MCF 10A (cell line): ENCODE measurements at regions of chr2 and their contacts with region 1.

Region 1: DNA sequence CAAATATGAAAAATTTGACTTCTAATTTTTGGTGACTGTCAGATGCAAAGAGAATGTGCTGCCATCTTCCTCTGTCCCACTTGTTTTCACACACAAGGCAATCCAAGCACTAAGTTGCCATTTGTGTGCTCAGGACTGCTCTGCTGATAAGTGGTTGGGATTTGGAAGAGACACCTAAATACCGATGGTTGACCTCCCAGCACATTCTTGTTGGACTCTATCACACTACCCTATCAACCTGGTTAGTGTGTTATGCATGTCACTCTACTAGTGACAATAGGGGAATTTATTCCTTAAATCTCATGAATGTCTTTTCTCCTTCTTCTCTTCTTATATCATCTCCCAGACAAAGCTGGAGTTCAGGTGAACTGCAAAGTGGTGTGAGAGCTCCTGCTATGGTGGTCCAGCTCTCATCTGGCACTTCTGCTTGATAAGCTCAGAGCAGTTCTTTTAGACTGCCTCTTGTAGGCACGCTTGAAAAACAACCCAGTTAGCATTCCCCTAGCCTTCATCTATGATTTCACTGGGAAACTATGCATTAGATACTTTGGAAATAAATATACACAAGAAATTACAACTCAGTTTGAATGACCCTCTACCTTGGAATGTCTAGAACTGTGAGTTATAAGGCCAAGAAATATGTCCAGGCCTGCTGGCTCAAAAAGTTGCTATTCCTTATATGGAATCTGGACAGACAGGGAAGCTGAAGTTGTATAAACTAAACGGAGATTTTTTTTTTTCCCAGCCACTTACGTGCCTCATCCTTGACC is 404.8 kb downstream of the MEIS1 start:
- DNase-seq: peak; percentile 79
- H3K4me3 Mint-ChIP-seq: peak overlapping the region; percentile 17
- H3K27ac Mint-ChIP-seq: peak overlapping the region; percentile 93
- H3K4me1 Mint-ChIP-seq: peaks cover 46% of the 10 kb centered on the region
- H3K27me3 Mint-ChIP-seq: no peaks in the 10 kb centered on the region
- CTCF ChIP-seq: no peak

Region 2: DNA sequence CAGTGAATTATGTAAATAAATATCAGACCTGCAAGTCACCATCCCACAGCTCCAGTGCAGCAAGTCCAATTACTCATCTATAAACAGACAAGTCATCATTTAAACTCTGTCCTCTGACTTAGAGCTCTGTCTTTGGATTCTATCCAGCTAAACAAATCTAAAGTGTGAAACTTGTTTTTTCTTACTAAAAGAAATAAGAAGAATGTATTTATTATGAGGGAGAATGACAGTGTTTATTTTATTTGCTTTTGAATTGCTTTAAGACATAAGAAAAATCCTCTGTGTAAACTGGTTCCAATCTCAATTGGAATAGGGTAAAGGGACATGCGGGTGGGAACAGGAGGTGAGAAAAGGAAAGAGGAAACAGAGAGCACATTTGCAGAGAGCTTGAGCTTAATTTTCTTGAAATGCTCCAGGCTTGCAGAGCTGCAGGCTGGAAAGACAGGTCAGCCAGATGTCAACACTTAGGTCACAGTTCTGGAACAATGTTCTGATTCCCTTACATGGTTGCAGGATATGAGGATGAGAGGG is 49.0 kb before region 1 on chr2:
- CTCF ChIA-PET with region 1: interaction called, 3 read pairs
- POLR2A ChIA-PET with region 1: interaction called, 14 read pairs
- intact Hi-C with region 1: no loop called
- DNase-seq: peak; percentile 40
- H3K4me3 Mint-ChIP-seq: no peak overlapping the region
- H3K27ac Mint-ChIP-seq: peak overlapping the region; percentile 6
- H3K4me1 Mint-ChIP-seq: peaks cover 16% of the 10 kb centered on the region
- H3K27me3 Mint-ChIP-seq: no peaks in the 10 kb centered on the region
- CTCF ChIP-seq: no peak

Region 3: DNA sequence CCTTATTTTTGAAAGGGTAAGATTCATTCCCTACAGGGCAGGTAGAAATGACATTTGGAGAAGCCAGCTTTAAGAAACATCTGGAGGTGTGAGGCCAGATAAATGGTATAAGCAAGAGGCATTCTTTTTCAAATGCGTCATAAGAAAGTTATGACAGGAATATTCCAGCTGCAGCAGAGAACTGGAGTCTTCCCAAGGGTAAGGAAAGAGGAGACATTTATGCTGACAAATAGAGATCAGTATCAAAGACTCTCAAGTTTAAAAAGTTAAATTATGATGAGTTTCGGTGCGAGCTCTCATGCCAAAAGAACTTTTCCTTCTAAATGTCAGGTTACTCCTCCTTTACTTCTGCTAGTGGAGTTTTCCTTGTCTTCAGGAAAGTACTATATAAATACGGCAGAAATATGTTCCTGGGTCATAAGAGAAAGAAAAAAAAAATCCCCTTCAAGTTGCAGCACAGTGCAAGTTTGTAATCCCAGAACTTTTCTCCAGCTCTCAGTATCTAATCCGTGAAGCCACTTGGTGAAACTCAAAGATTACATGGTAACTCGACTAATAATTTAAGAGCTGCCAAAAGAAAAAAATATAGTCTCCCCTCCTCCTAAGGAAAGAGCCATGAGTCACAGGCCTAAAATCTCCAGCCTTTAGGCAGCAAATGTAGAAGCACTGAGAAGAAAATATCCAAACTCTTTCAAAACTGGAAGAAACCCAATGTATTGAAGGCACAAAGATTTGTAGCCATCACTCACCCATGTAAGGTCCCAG is 23.3 kb after region 1 on chr2:
- CTCF ChIA-PET with region 1: no interaction called
- POLR2A ChIA-PET with region 1: interaction called, 23 read pairs
- intact Hi-C with region 1: no loop called
- DNase-seq: peak; percentile 45
- H3K4me3 Mint-ChIP-seq: peak overlapping the region; percentile 47
- H3K27ac Mint-ChIP-seq: peak overlapping the region; percentile 91
- H3K4me1 Mint-ChIP-seq: peaks cover 13% of the 10 kb centered on the region
- H3K27me3 Mint-ChIP-seq: no peaks in the 10 kb centered on the region
- CTCF ChIP-seq: no peak

Region 4: DNA sequence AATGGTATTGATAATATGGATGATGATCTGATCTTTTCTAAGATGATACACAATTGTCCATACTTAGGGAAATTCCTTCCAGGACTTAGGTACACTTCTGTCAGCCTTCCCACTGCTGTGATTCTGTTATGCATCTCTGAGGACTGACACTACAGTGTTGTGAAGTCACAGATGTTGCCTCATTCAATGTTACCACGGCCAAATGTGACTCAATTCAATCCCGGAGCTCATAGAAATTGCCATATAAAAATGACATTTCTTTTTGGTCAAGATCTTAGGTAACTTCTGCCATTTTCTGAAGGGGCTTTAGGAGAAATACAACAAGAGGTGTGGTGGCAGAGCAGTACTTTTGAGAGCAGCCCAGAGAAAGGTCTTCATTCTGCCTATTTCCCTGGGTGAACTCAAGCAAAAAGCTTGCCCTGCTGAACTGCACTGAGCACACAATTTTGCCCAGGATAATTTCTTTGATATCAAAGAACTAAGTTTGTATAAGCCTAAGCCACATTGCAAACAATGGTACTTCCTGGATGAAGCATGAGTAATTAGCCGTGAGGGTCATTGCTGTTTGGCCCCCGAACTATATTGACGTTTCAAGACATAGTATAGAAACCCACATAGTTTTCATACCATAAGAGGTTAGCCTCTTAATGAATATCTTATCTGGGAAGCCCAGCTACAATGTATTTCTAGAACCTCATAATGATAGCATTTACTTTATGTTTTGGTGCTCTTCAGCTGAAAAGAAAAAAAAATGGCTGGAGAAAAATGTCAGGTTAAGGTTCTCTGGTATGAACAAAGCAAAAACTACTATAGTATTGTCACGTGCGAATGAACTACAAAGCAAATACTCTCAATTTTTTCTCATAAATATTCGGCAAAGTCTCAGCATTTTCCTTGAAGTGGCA is 32.6 kb after region 1 on chr2:
- CTCF ChIA-PET with region 1: no interaction called
- POLR2A ChIA-PET with region 1: interaction called, 11 read pairs
- intact Hi-C with region 1: no loop called
- DNase-seq: peak; percentile 34
- H3K4me3 Mint-ChIP-seq: no peak overlapping the region
- H3K27ac Mint-ChIP-seq: no peak overlapping the region
- H3K4me1 Mint-ChIP-seq: peaks cover 25% of the 10 kb centered on the region
- H3K27me3 Mint-ChIP-seq: no peaks in the 10 kb centered on the region
- CTCF ChIP-seq: no peak

Region 5: GRCh38 chr2:66929632-66930338 is 90.0 kb after region 1 on chr2:
- CTCF ChIA-PET with region 1: interaction called, 3 read pairs
- POLR2A ChIA-PET with region 1: interaction called, 41 read pairs
- intact Hi-C with region 1: no loop called
- DNase-seq: peak; percentile 79
- H3K4me3 Mint-ChIP-seq: peak overlapping the region; percentile 55
- H3K27ac Mint-ChIP-seq: peak overlapping the region; percentile 68
- H3K4me1 Mint-ChIP-seq: peaks cover 22% of the 10 kb centered on the region
- H3K27me3 Mint-ChIP-seq: no peaks in the 10 kb centered on the region
- CTCF ChIP-seq: no peak

Region 6: DNA sequence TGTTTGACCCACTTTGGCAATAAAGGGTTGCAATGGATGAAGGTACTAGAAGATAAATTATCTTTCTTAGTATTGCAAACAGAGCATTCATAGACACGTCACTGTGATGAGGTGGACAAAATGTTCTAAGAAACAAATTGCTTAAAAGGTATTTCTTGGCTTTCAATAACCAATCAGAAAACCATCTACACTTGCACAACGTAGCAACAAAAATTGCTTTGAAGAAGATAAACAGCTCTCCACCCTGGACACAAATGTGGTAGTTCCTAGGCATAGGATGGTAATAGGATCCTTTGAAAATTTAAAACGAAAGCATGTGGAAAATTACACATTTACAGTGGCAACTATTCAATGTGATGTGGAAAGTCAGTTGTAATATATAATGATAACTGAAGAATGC is 117.5 kb after region 1 on chr2:
- CTCF ChIA-PET with region 1: no interaction called
- POLR2A ChIA-PET with region 1: interaction called, 27 read pairs
- intact Hi-C with region 1: no loop called
- DNase-seq: peak; percentile 44
- H3K4me3 Mint-ChIP-seq: no peak overlapping the region
- H3K27ac Mint-ChIP-seq: peak overlapping the region; percentile 81
- H3K4me1 Mint-ChIP-seq: peaks cover 22% of the 10 kb centered on the region
- H3K27me3 Mint-ChIP-seq: no peaks in the 10 kb centered on the region
- CTCF ChIP-seq: no peak